Motor neuron (in vitro differentiated cells): ENCODE measurements at regions of chr7 and their contacts with region 1.

Region 1: GRCh38 chr7:50369143-50370026 is 64.9 kb downstream of the IKZF1 start:
- ATAC-seq: no peak
- H3K4me3 ChIP-seq: no peak overlapping the region
- H3K27ac ChIP-seq: no peak overlapping the region
- H3K4me1 ChIP-seq: no peaks in the 10 kb centered on the region

Region 2: GRCh38 chr7:50212666-50213621 is 156.4 kb before region 1 on chr7:
- in situ Hi-C with region 1: loop called in 1 of 9 experiments (anchors 25 kb)
- ATAC-seq: no peak
- H3K4me3 ChIP-seq: no peak overlapping the region
- H3K27ac ChIP-seq: no peak overlapping the region
- H3K4me1 ChIP-seq: no peaks in the 10 kb centered on the region